Motor neuron (in vitro differentiated cells): ENCODE measurements at regions of chr2 and their contacts with region 1.

Region 1: DNA sequence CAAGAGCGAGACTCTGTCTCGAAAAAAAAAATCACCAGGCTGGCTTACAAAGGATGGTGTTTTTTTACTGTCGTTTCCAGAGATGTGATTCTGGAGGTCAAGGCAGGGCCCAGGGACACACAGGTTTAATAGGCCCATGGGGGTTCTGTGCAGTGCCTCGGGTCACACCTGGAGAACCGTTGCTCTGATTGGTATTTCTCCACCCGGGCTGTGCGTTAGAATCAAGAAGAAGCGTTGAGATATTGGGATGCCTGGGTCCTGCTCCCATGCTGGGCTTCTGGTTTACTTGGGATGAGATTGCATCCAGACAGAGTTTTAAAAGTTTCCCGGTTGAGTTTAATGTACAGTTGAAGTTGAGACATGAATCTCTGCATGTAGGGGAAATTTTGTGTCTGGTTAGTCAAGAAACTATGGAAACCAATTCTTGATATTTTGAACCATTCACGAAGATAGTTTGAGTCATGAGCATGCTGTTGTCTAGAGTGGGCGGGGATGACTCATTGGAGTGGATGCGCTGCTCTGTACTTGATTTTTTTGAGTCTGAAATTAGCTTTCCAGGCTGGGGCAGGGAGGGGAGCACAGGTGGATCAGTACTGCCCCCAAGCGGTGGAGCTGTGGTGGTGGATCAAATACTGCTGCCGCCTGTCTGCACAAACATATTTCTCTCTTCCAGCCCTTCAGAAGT is 50.1 kb downstream of the GREB1 start:
- ATAC-seq: peak; percentile 92 to 98 (median 97)
- H3K4me3 ChIP-seq: no peak overlapping the region
- H3K27ac ChIP-seq: no peak overlapping the region
- H3K4me1 ChIP-seq: peaks cover 0 to 14% of the 10 kb centered on the region in 2 donors

Region 2: GRCh38 chr2:10832203-10832936 is 751.6 kb before region 1 on chr2:
- in situ Hi-C with region 1: loop called in 1 of 9 experiments (anchors 25 kb)
- ATAC-seq: peak; percentile 89 to 95 (median 93)
- H3K4me3 ChIP-seq: peak overlapping the region in 2 of 5 donors; percentile 6 to 12
- H3K27ac ChIP-seq: no peak overlapping the region
- H3K4me1 ChIP-seq: peaks cover 19 to 26% of the 10 kb centered on the region in 2 donors

Region 3: GRCh38 chr2:11477994-11478393 is 106.0 kb before region 1 on chr2:
- in situ Hi-C with region 1: loop called in 7 of 9 experiments (anchors 5 to 25 kb)
- ATAC-seq: peak in 3 of 8 experiments; percentile 53 to 77 (median 77)
- H3K4me3 ChIP-seq: no peak overlapping the region
- H3K27ac ChIP-seq: no peak overlapping the region
- H3K4me1 ChIP-seq: peaks cover 38 to 41% of the 10 kb centered on the region in 2 donors